ENCODE measurements at regions of chr1 and their contacts with region 1.

Region 1: DNA sequence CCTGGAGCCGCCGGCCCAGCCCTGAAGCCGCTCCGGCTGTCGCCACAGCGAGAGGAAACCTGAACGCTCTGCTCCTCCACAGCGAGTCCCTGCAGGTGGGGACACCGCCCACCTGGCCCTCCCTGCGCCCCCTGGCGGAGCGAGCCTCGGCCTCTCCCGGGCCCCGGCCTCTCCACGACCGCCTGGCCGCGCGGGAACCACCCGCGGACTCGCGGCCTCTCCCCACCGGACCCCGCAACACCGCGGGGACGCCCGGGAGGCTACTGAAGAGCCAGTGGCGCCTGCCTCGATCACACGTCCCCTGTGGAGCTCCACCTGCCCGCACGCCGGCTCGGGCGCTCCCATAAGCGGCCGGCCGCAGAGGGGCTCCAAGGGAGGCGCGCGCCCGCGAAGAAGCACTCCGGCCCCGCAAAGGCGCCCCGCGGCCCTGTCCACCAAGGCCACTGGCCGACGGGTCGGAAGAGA is 109.6 kb downstream of the KCNN3 start:
- DNase-seq: peak; percentile 95
- H3K4me3 Mint-ChIP-seq: peak overlapping the region; percentile 39
- H3K27ac Mint-ChIP-seq: no peak overlapping the region
- H3K4me1 Mint-ChIP-seq: no peaks in the 10 kb centered on the region
- H3K27me3 Mint-ChIP-seq: peaks cover 88% of the 10 kb centered on the region
- CTCF ChIP-seq: peak; percentile 97

Region 2: GRCh38 chr1:154479764-154480421 is 280.6 kb before region 1 on chr1:
- CTCF ChIA-PET with region 1: interaction called, 3 read pairs
- intact Hi-C with region 1: loop called (anchors 5 kb)
- DNase-seq: peak; percentile 88
- H3K4me3 Mint-ChIP-seq: no peak overlapping the region
- H3K27ac Mint-ChIP-seq: no peak overlapping the region
- H3K4me1 Mint-ChIP-seq: peaks cover 30% of the 10 kb centered on the region
- H3K27me3 Mint-ChIP-seq: peaks cover 12% of the 10 kb centered on the region
- CTCF ChIP-seq: peak; percentile 82

Region 3: GRCh38 chr1:154558575-154559465 is 201.7 kb before region 1 on chr1 and contains the start of gene UBE2Q1:
- CTCF ChIA-PET with region 1: interaction called, 4 read pairs
- intact Hi-C with region 1: loop called (anchors 1 kb)
- DNase-seq: peak; percentile 99
- H3K4me3 Mint-ChIP-seq: peak within 1 kb of the TSS; percentile 83
- H3K27ac Mint-ChIP-seq: peak within 1 kb of the TSS; percentile 84
- H3K4me1 Mint-ChIP-seq: peaks cover 16% of the 10 kb centered on the region
- H3K27me3 Mint-ChIP-seq: no peaks in the 10 kb centered on the region
- CTCF ChIP-seq: no peak
- total RNA-seq, gene UBE2Q1: 96.7 and 108 TPM in 2 replicates

Region 4: DNA sequence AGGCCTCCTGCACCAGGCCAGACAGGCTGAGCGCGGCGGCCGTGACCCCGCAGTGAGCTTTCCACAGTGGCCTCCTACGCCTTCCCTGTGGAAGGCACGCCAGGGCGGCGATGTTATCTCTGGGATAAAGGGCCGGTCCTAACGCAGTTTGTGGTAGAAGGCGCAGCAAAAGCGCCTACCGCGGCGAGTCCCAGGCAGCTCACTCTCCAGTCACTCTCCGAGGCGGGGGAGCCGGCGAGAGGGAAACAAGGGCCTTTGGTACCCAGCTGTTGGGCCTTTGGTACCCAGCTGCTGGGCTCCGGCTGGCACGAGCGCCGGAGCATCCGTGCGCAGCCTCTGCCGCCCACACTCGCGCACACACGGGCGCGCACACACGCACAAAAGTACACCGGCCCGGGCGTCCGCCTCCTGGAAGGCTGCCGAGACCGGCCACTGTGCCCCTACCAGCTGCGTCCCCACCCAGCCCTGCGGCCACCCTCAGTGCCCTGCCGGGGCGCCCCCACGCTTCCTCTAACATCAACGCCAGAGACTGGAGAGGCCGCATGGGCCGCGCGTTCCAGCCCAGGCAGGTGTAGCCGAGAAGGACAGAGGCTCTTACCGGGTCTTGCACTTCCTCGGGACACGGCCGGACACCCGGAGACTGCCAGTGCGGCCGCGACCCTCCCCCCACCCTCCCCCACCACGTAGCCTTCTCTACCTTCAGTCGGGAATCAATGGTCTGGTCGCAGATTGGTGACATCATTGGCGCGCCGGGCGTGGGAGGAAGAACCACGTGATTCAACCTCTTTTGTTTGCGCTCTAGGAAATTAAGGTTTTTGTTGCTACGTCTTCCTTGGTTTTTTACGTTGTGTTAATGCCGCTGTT is 133.0 kb before region 1 on chr1:
- CTCF ChIA-PET with region 1: no interaction called
- intact Hi-C with region 1: no loop called
- DNase-seq: peak; percentile 92
- H3K4me3 Mint-ChIP-seq: peak overlapping the region; percentile 85
- H3K27ac Mint-ChIP-seq: peak overlapping the region; percentile 97
- H3K4me1 Mint-ChIP-seq: peaks cover 22% of the 10 kb centered on the region
- H3K27me3 Mint-ChIP-seq: peaks cover 11% of the 10 kb centered on the region
- CTCF ChIP-seq: no peak

Region 5: DNA sequence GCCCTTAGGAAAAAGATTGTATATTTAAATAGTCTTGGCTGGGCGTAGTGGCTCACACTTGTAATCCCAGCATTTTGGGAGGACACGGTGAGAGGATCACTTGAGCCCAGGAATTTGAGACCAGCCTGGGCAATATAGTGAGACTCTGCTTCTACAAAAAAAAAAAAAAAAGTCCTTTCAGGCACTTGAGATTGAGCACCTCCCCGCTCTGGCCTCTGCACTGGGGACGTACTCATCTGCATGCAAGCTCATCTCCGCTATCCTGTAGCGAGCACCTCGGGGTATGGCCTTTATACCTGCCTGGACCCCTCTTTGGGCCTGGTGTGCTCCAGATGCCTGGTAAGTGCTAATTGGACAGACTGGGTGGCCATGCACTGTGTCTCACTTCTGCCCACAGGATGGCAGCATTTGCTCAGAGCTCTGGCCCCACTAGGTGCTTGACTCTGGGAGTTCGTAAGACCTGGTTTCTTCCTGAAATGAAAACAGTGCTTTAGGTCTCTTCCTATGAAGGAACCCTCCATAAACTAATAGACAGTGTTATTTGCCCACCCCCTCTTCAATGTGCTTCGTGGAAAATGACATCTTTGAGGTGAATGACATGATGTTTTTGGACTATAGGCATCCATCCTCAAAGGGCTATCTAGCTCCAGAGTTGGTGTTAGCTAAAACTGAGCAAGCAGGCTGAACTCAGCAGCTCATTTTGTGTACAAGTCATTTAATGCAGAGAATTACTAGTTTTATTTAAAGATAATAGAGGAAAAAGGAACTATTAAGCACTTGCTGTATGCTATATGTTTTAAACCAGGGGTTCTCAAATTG is 90.8 kb before region 1 on chr1:
- CTCF ChIA-PET with region 1: interaction called, 4 read pairs
- intact Hi-C with region 1: loop called (anchors 1 kb)
- DNase-seq: peak; percentile 80
- H3K4me3 Mint-ChIP-seq: no peak overlapping the region
- H3K27ac Mint-ChIP-seq: no peak overlapping the region
- H3K4me1 Mint-ChIP-seq: no peaks in the 10 kb centered on the region
- H3K27me3 Mint-ChIP-seq: peaks cover 22% of the 10 kb centered on the region
- CTCF ChIP-seq: peak; percentile 82

Region 6: DNA sequence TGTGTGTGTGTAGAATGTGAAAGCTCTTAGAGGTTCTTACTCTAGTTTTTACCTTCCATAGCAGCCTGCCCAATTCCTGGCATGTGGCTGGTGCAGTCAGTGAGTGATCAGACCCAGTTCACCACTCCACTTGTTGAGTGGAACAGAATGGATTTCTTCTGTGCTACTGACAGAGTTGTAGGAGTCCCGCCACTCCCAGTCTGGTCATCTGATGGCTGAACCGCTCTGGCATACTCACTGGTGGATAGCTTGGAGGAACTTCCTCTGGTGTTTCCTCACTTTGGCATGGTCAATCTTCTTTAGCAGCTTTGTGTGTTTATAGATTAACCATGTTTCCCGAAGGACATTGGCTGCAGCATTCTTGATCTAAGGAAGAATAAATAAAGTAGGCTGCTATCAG is 45.9 kb before region 1 on chr1:
- CTCF ChIA-PET with region 1: no interaction called
- intact Hi-C with region 1: loop called (anchors 2 kb)
- DNase-seq: peak; percentile 72
- H3K4me3 Mint-ChIP-seq: no peak overlapping the region
- H3K27ac Mint-ChIP-seq: no peak overlapping the region
- H3K4me1 Mint-ChIP-seq: peaks cover 12% of the 10 kb centered on the region
- H3K27me3 Mint-ChIP-seq: peaks cover 18% of the 10 kb centered on the region
- CTCF ChIP-seq: no peak

Region 7: GRCh38 chr1:154936555-154937084 is 176.1 kb after region 1 on chr1 and contains the start of gene PMVK:
- CTCF ChIA-PET with region 1: no interaction called
- intact Hi-C with region 1: loop called (anchors 10 kb)
- DNase-seq: peak; percentile 97
- H3K4me3 Mint-ChIP-seq: peak within 1 kb of the TSS; percentile 95
- H3K27ac Mint-ChIP-seq: peak within 1 kb of the TSS; percentile 99
- H3K4me1 Mint-ChIP-seq: peaks cover 50% of the 10 kb centered on the region
- H3K27me3 Mint-ChIP-seq: no peaks in the 10 kb centered on the region
- CTCF ChIP-seq: peak; percentile 26
- total RNA-seq, gene PMVK: 43.0 and 47.3 TPM in 2 replicates

Region 8: GRCh38 chr1:155063550-155064110 is 303.1 kb after region 1 on chr1 and contains the start of gene EFNA4:
- CTCF ChIA-PET with region 1: no interaction called
- intact Hi-C with region 1: loop called (anchors 10 kb)
- DNase-seq: peak; percentile 90
- H3K4me3 Mint-ChIP-seq: peak within 1 kb of the TSS; percentile 76
- H3K27ac Mint-ChIP-seq: peak within 1 kb of the TSS; percentile 89
- H3K4me1 Mint-ChIP-seq: peaks cover 30% of the 10 kb centered on the region
- H3K27me3 Mint-ChIP-seq: no peaks in the 10 kb centered on the region
- CTCF ChIP-seq: no peak
- total RNA-seq, gene EFNA4: 12.6 and 13.9 TPM in 2 replicates

Region 9: GRCh38 chr1:155553349-155553748 is 792.8 kb after region 1 on chr1:
- CTCF ChIA-PET with region 1: no interaction called
- intact Hi-C with region 1: no loop called
- DNase-seq: no peak
- H3K4me3 Mint-ChIP-seq: no peak overlapping the region
- H3K27ac Mint-ChIP-seq: no peak overlapping the region
- H3K4me1 Mint-ChIP-seq: peaks cover 7% of the 10 kb centered on the region
- H3K27me3 Mint-ChIP-seq: no peaks in the 10 kb centered on the region
- CTCF ChIP-seq: no peak